ENCODE measurements at regions of chr1 and their contacts with region 1.

Region 1: GRCh38 chr1:165697881-165698760 is at the start of gene ALDH9A1:
- DNase-seq: peak; percentile 70 to 94 (median 87)
- H3K4me3 ChIP-seq: peak within 1 kb of the TSS; percentile 53 to 98 (median 84)
- H3K27ac ChIP-seq: peak within 1 kb of the TSS; percentile 63 to 99 (median 91)
- H3K27me3 ChIP-seq: no peaks in the 10 kb centered on the region
- CTCF ChIP-seq: peak in 54 of 56 donors; percentile 4 to 66 (median 44)
- total RNA-seq, gene ALDH9A1: 29.9 to 85.0 (median 47.9) TPM

Region 2: DNA sequence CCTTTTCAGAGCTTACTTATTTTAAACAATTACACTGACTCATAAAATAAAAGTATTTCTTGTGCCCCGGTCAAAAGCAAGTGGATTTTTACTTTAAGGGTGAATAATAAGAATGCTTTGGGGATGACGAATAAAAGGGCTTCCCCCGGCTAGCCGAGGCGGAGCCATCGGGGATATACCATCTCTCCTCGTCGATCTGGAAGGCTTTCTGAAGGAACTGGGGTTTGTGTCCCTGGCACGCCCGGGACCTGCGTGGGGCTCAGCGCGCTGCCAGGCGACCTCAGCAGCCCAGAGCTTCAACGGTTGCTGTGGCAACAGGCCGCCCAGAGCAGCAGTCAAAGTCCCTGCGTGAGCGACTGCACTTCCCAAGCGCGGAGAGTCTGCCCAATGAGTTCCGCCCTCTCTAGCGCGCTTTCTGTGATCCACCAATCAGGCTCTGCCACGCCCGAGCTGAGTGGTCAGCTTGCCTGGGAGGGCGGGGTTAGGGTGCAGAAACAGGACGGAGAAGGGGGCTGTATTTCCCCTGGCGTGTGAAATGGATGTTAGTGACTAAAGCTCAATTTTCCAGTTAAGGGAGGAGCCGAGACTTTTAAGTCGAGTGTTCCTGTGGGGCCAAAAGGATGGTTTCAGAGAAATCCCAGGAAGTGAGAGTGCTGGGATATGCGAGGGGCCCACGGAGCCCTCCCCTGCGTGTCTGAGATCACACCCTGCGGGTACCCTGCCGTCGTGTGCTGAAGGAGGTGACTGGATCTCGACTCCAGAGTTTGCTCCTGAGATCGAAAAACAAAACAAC is 100.0 kb before region 1 on chr1:
- intact Hi-C with region 1: loop called in 1 of 2 experiments (anchors 10 kb)
- DNase-seq: peak; percentile 89 to 99 (median 96)
- H3K4me3 ChIP-seq: peak overlapping the region; percentile 41 to 96 (median 70)
- H3K27ac ChIP-seq: peak overlapping the region in 33 of 59 donors; percentile 4 to 84 (median 55)
- H3K27me3 ChIP-seq: peaks cover 0 to 18% (median 3%) of the 10 kb centered on the region in 45 donors
- CTCF ChIP-seq: peak in 20 of 56 donors; percentile 5 to 52 (median 28)

Region 3: DNA sequence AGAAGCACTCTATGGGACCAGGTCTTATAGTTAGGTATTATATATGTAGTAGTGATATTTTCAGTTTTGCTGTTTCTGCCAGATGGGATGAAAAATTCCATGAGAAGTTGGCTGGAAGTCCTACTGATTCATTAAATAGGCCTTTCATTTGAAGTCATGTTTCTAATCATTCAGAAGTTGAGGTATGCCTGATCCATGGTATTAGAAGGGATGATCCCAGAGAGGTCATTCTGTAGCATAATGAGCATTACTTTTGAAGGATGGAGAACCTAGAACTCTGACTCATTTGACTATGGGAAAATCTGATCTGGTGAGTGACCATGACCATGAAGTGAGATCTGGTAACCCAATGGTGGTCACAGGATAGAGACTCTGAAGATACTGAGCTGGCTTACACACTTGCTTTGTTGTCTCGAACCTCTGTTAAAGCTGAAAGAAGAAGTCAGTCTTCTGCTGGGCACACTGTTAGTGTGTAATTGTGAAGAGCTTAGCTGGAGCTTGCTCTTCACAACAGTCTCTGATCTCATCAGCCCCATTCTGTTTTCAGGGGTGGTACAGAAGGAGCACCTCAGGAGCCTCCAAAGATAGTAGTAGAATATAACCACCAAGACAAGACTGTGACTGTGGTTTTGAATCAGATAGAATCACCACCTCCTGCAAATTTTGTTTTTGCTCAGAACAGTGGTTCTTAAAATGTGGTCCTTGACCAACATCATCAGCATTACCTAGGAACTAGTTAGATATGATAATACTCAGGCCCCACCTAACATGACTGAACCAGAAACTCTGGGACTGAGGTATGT is 58.1 kb before region 1 on chr1:
- intact Hi-C with region 1: no loop called
- DNase-seq: no peak
- H3K4me3 ChIP-seq: no peak overlapping the region
- H3K27ac ChIP-seq: no peak overlapping the region
- H3K27me3 ChIP-seq: no peaks in the 10 kb centered on the region
- CTCF ChIP-seq: no peak

Region 4: DNA sequence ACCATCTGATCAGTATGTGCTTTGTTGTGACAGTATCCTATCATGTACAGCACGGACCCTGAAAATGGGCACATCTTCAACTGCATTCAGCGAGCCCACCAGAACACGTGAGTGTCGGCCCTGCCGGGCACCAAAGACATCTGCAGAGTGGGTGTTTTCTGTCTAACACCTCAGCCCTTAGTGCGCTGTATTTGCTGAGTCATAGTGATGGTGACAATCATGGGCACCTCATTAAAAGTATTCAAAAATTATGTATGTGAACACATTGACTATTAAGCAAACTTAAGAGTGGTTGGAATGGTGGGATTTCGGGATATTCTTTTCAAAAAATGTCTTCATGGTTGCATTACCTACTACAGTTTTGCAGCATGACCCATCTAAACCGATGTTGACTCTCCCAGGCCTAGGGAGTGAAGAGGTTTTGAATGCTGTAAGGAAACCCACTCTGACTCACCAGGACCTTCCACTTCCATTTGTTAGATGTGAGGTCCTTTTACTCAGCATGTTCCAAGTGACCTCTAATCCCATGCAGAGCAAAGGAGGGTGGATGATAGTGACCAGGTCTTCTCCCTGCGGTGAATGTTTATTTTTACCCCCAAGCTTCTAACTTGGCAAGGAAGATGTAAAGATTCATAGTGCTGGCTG is 47.0 kb before region 1 on chr1:
- intact Hi-C with region 1: no loop called
- DNase-seq: no peak
- H3K4me3 ChIP-seq: no peak overlapping the region
- H3K27ac ChIP-seq: peak overlapping the region in 17 of 59 donors; percentile 0 to 61 (median 24)
- H3K27me3 ChIP-seq: no peaks in the 10 kb centered on the region
- CTCF ChIP-seq: no peak

Region 5: GRCh38 chr1:165717918-165718515 is 19.9 kb after region 1 on chr1:
- intact Hi-C with region 1: loop called in 1 of 2 experiments (anchors 2 kb)
- DNase-seq: peak in 4 of 10 donors; percentile 11 to 69 (median 37)
- H3K4me3 ChIP-seq: no peak overlapping the region
- H3K27ac ChIP-seq: no peak overlapping the region
- H3K27me3 ChIP-seq: no peaks in the 10 kb centered on the region
- CTCF ChIP-seq: peak; percentile 32 to 80 (median 66)

Region 6: GRCh38 chr1:165836664-165837482 is 138.8 kb after region 1 on chr1:
- intact Hi-C with region 1: no loop called
- DNase-seq: no peak
- H3K4me3 ChIP-seq: no peak overlapping the region
- H3K27ac ChIP-seq: no peak overlapping the region
- H3K27me3 ChIP-seq: no peaks in the 10 kb centered on the region
- CTCF ChIP-seq: no peak

Measured in dorsolateral prefrontal cortex (tissue), 120 donors.